ENCODE measurements at regions of chr3 and their contacts with region 1.

Region 1: DNA sequence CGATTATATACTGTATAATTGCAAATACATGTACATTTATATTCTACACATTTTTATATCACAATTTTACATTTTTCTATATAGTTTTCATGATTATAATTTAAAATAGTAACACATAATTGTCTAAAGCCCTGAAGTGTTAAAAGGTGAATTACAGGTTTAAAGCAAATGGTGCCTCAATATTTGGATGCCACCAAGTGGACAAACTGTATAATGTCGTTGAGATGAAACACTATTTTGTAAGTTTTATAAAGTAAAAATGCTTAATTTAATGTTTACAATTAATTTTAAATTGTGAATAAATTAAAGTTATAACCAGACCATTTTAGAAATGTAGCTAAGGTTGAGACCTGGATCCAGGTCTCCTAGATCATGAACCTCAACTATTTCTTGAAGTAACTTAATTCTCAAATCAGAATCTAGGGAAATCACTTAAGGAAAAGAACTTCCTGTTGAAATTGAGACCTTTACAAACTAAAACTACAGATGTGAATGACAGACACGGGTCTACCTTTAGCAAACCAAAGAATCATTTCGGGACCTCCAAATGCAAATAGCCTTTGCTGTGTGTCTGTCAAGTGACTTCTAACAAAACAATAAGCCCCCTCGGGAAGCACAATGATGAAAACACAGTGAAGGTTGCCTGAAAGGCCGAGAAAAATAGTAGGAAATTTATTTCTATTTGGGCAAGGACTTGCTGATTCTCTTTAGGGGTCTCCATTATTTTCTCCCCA is 37.8 kb downstream of the EHHADH start:
- DNase-seq: peak; percentile 55
- H3K4me3 ChIP-seq: peak overlapping the region in 2 of 3 experiments; percentile 4 to 27
- H3K27ac ChIP-seq: no peak overlapping the region
- H3K4me1 ChIP-seq: peaks cover 6% of the 10 kb centered on the region
- H3K27me3 ChIP-seq: no peaks in the 10 kb centered on the region
- CTCF ChIP-seq: peak; percentile 19 to 27
- POLR2A ChIP-seq: no peak

Region 2: GRCh38 chr3:184952671-184953070 is 263.4 kb before region 1 on chr3:
- CTCF ChIA-PET with region 1: no interaction called
- POLR2A ChIA-PET with region 1: no interaction called
- dilution Hi-C with region 1: no loop called
- intact Hi-C with region 1: no loop called
- DNase-seq: no peak
- H3K4me3 ChIP-seq: no peak overlapping the region
- H3K27ac ChIP-seq: no peak overlapping the region
- H3K4me1 ChIP-seq: no peaks in the 10 kb centered on the region
- H3K27me3 ChIP-seq: no peaks in the 10 kb centered on the region
- CTCF ChIP-seq: no peak
- POLR2A ChIP-seq: no peak

Region 3: DNA sequence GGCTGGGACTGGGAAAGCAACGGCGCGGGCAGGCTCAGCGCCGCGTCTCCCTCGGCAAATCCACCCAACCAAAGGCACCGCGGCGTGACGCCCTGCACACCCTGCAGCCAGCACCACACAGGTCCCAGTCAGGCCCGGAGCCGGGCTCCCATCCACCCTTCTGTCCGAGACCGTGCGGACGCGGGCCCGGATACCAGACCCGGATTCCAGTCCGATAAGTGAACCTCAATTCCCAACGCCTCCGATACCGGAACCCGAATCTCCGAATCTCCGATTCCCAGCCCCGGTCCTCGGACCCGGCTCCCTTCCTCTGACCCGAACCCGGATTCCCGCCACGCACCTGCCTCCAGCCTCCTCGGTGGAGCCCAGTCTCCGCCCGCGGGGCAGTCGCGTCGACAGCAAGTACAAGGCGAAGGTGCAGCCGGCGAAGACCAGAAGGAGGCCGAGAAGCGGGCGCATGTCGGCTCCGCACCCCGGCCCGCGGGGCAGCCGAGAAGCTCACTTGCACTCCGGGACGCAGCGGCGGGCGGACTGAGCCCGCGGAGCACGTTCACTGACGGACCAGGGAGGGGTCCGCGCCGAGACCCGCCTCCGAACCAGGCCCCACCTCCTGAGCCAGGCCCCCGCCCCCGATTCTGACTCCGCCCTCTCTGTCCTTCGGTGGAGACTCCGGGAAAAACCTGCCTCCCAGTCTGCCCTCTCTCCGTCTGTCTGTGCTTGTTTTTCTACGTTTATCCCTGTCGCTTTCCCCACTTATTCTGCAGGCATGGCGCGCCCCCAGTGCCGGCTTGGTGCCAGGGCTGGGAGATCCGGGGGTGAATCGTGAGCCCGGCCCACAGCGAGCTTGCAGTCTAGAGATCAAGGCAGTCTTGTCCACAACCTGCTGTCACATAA is 282.7 kb after region 1 on chr3 and contains the start of gene TMEM41A:
- CTCF ChIA-PET with region 1: no interaction called
- POLR2A ChIA-PET with region 1: no interaction called
- dilution Hi-C with region 1: no loop called
- intact Hi-C with region 1: loop called (anchors 1 kb)
- DNase-seq: peak; percentile 90
- H3K4me3 ChIP-seq: peak within 1 kb of the TSS; percentile 55 to 93 (median 77)
- H3K27ac ChIP-seq: peak within 1 kb of the TSS; percentile 14
- H3K4me1 ChIP-seq: peaks cover 5% of the 10 kb centered on the region
- H3K27me3 ChIP-seq: peaks cover 2 to 8% of the 10 kb centered on the region in 2 experiments
- CTCF ChIP-seq: no peak
- POLR2A ChIP-seq: peak; percentile 90
- total RNA-seq, gene TMEM41A: 16.0 and 16.8 TPM in 2 replicates